ENCODE measurements at regions of chr1 and their contacts with region 1.

Region 1: GRCh38 chr1:32247983-32248889 is 1.2 kb downstream of the FAM167B start:
- DNase-seq: peak; percentile 59
- ATAC-seq: peak; percentile 71
- H3K4me3 ChIP-seq: peak overlapping the region in 2 of 3 experiments; percentile 8 to 58; a peak in 2 of 6 replicates
- H3K27ac ChIP-seq: no peak overlapping the region
- H3K4me1 ChIP-seq: peaks cover 83% of the 10 kb centered on the region
- H3K27me3 ChIP-seq: no peaks in the 10 kb centered on the region
- CTCF ChIP-seq: peak; percentile 98
- EP300 ChIP-seq: no peak
- POLR2A ChIP-seq: no peak
- RAD21 ChIP-seq: peak; percentile 94

Region 2: DNA sequence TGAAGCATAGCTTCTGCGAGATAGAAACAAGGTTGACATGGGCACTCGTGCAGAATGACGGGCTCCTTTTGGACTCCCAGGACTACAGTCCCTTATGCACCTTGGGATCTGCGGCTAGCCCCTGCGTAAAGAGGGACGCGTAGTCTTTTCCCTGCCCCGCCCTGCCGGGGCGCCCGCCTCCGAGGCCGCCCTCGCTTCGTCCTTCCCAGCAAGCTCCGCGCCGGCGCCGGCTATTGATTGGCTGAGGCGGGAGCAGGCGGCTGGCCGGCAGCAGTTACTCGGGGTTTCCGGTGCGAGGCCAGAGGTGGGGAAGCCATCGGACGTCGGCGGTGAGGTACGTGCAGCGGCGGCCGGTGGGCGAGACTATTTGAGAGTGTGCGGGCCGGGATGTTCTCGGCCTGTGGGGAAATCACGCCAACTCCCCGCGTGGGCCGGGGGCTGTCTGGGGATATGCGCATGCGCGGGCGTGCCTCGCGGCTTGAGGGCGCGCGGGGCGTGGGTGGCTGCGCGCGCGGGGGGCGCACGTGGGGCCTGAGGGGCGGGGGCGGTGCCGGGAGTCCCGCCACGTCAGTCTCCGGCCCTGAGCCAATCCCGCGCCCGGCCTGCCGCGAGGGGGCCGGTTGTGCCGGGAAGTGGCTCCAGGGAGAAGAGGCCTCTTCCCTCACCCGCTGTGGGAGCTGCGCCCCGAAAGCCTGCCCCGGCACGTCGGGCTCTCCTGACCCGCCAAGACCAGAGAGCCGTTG is 68.6 kb before region 1 on chr1 and contains the start of gene TXLNA:
- CTCF ChIA-PET with region 1: no interaction called
- POLR2A ChIA-PET with region 1: interaction called, 19 read pairs
- in situ Hi-C with region 1: no loop called
- intact Hi-C with region 1: no loop called
- DNase-seq: peak; percentile 86
- ATAC-seq: peak; percentile 85
- H3K4me3 ChIP-seq: peak within 1 kb of the TSS; percentile 58 to 76 (median 61)
- H3K27ac ChIP-seq: peak within 1 kb of the TSS; percentile 87
- H3K4me1 ChIP-seq: peaks cover 64% of the 10 kb centered on the region
- H3K27me3 ChIP-seq: no peaks in the 10 kb centered on the region
- CTCF ChIP-seq: no peak
- EP300 ChIP-seq: no peak
- POLR2A ChIP-seq: peak; percentile 74 to 95
- RAD21 ChIP-seq: 0 out of 2 replicates have a peak, but pooled peaks have one; percentile 14
- total RNA-seq, gene TXLNA: 67.8 and 70.7 TPM in 2 replicates

Region 3: DNA sequence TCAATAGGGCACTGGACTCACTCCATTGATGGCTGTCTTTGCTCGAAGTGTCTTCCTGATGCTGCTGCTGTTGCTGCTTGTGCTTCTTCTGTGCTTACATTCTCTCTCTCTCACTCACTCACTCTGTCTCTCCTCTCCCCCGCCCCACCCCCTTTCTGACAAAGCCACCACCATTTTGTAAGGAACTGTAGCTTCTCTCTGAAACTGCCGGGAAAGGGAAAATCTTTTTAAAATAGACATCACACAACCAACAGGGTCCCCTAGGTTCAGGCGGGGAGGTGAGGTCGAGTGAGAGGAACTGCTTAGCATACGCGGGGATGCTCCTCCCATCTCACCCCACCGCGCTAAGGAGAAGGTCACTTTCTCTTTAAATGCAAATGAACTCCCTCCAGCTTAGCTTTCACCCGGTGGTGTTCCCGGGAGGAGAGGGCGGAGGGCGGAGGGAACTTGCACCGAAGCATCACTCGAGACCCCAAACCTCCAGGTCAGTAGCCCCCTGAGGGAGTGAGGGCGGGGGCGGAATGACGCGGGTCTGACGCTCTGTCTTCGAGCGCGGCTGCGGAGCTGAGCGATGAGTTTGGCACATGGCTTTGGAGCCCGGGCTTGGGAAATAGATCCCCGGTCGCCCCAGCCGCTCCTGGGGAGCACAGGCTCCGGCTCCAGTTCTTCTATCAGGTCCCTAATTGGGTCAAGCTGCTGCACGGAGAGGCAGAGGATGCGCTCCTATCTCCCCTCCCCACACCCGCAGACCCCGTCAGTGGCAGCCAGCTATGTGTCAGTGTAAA is 47.8 kb before region 1 on chr1 and contains the start of gene CCDC28B:
- CTCF ChIA-PET with region 1: no interaction called
- POLR2A ChIA-PET with region 1: no interaction called
- in situ Hi-C with region 1: no loop called
- intact Hi-C with region 1: no loop called
- DNase-seq: no peak
- ATAC-seq: peak; percentile 42
- H3K4me3 ChIP-seq: peak within 1 kb of the TSS; percentile 64 to 72 (median 65)
- H3K27ac ChIP-seq: no peak within 1 kb of the TSS
- H3K4me1 ChIP-seq: peaks cover 20% of the 10 kb centered on the region
- H3K27me3 ChIP-seq: no peaks in the 10 kb centered on the region
- CTCF ChIP-seq: no peak
- EP300 ChIP-seq: no peak
- POLR2A ChIP-seq: no peak
- RAD21 ChIP-seq: no peak
- total RNA-seq, gene CCDC28B: 2.8 and 3.5 TPM in 2 replicates

Region 4: DNA sequence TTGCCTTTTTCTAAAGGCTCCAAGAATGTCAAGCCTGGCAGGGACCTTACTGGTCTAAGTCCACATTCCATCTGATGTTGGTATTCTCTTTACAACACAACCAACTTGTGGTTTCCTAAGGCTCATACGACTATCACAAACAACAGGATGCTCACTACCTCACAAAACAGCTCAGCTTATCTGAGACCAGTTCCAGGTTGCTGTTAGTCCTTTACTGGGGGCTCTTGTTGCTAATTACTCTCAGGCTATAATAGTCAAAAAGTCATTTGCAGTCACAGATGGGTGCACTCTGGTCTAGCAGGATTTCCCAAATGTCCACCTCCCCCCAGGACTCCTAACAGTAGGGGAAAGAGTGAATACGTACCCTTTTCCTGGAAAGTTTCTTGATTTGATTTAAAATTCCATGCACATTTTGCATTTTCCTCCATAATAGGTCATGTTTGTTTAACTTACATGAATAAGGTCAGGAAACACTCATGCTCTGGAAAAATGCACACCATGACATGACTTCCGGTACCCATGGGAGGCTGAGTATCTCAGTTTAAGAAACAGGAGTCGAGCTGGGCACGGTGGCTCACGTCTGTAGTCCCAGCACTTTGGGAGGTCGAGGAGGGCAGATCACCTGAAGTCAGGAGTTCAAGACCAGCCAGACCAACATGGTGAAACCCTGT is 18.8 kb after region 1 on chr1:
- CTCF ChIA-PET with region 1: no interaction called
- POLR2A ChIA-PET with region 1: interaction called, 12 read pairs
- in situ Hi-C with region 1: no loop called
- intact Hi-C with region 1: no loop called
- DNase-seq: peak; percentile 39
- ATAC-seq: peak; percentile 46
- H3K4me3 ChIP-seq: no peak overlapping the region
- H3K27ac ChIP-seq: no peak overlapping the region
- H3K4me1 ChIP-seq: peaks cover 34% of the 10 kb centered on the region
- H3K27me3 ChIP-seq: 0 out of 5 replicates have a peak, but pooled peaks cover 0 to 2% of the 10 kb centered on the region in 2 experiments
- CTCF ChIP-seq: no peak
- EP300 ChIP-seq: no peak
- POLR2A ChIP-seq: no peak
- RAD21 ChIP-seq: no peak

Region 5: GRCh38 chr1:32321712-32322291 is 73.6 kb after region 1 on chr1:
- CTCF ChIA-PET with region 1: interaction called, 3 read pairs
- POLR2A ChIA-PET with region 1: interaction called, 24 read pairs
- in situ Hi-C with region 1: no loop called
- intact Hi-C with region 1: no loop called
- DNase-seq: peak; percentile 86
- ATAC-seq: peak; percentile 92
- H3K4me3 ChIP-seq: peak overlapping the region in 1 of 3 experiments; percentile 20; a peak in 1 of 6 replicates
- H3K27ac ChIP-seq: peak overlapping the region; percentile 77
- H3K4me1 ChIP-seq: peaks cover 49% of the 10 kb centered on the region
- H3K27me3 ChIP-seq: no peaks in the 10 kb centered on the region
- CTCF ChIP-seq: no peak
- EP300 ChIP-seq: peak in 1 of 2 experiments; percentile 89; a peak in 2 of 4 replicates
- POLR2A ChIP-seq: peak in 1 of 2 experiments; percentile 36; a peak in 1 of 4 replicates
- RAD21 ChIP-seq: no peak

Region 6: GRCh38 chr1:32394141-32394889 is 146.1 kb after region 1 on chr1 and contains the start of gene BSDC1:
- CTCF ChIA-PET with region 1: no interaction called
- POLR2A ChIA-PET with region 1: interaction called, 14 read pairs
- in situ Hi-C with region 1: no loop called
- intact Hi-C with region 1: no loop called
- DNase-seq: peak; percentile 99
- ATAC-seq: peak; percentile 98
- H3K4me3 ChIP-seq: peak within 1 kb of the TSS; percentile 77 to 99 (median 91)
- H3K27ac ChIP-seq: peak within 1 kb of the TSS; percentile 96
- H3K4me1 ChIP-seq: peaks cover 31% of the 10 kb centered on the region
- H3K27me3 ChIP-seq: no peaks in the 10 kb centered on the region; a peak in 1 of 5 replicates
- CTCF ChIP-seq: peak; percentile 31; the same call in 1 of the 2 replicates
- EP300 ChIP-seq: no peak
- POLR2A ChIP-seq: peak; percentile 77 to 96
- RAD21 ChIP-seq: no peak; the same call in 1 of the 2 replicates
- total RNA-seq, gene BSDC1: 33.2 and 40.3 TPM in 2 replicates

Region 7: GRCh38 chr1:32431736-32432400 is 183.6 kb after region 1 on chr1:
- CTCF ChIA-PET with region 1: no interaction called
- POLR2A ChIA-PET with region 1: no interaction called
- in situ Hi-C with region 1: no loop called
- intact Hi-C with region 1: no loop called
- DNase-seq: no peak
- ATAC-seq: no peak
- H3K4me3 ChIP-seq: no peak overlapping the region
- H3K27ac ChIP-seq: no peak overlapping the region
- H3K4me1 ChIP-seq: no peaks in the 10 kb centered on the region
- H3K27me3 ChIP-seq: peaks cover 0 to 38% of the 10 kb centered on the region in 2 experiments; a peak in 3 of 5 replicates
- CTCF ChIP-seq: no peak
- EP300 ChIP-seq: no peak
- POLR2A ChIP-seq: no peak
- RAD21 ChIP-seq: no peak

Measured in HepG2 (cell line).